Ascending aorta (tissue), 2 donors: ENCODE measurements at regions of chr16 and their contacts with region 1.

Region 1: GRCh38 chr16:25111403-25112166 is at the start of gene LCMT1:
- DNase-seq: peak; percentile 83 to 97
- H3K4me3 ChIP-seq: peak within 1 kb of the TSS; percentile 80 to 83
- H3K27ac ChIP-seq: peak within 1 kb of the TSS; percentile 57 to 62
- H3K4me1 ChIP-seq: peaks cover 9 to 21% of the 10 kb centered on the region in 2 donors
- H3K27me3 ChIP-seq: no peaks in the 10 kb centered on the region
- CTCF ChIP-seq: peak in 1 of 3 experiments; percentile 14
- total RNA-seq, gene LCMT1: 2.6 TPM

Region 2: DNA sequence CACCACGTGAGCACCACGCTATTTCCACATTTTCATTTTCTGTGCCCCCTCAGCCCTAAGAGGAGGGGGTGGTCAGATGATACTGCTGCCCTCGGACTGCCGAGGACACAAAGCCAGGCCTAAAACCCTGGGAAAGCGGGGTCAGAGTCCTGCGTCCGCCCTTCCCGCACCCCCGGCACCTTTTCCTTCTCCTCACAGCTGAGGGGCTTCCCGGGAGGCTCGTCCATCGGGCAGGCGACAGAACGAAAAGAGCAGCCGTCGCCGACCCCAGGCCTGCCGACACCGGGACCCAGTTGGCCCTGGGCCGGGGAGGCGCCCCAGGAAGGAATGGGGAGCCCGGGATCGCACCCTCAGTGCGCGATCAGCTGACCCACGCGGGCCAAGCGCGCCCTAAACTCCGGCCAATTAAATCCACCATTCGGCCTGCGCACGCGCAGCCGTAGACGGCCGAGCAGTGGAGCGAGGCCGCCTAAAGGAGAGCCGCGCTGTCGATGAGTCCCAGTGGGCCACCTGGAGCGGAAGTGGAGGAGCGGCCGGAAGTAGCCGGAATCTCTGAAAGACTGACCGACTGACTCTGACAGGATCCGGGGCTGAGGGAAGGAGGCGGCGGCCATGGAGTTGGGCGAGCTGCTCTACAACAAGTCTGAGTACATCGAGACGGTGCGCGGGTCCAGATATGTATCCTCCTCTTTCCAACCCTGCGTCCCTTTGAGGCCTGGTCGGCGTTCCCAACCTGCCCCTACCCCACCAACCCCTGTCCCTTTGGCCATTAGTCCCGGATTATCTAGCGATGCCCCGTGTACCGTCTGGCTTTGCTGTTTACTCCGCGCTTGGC is 1470.4 kb before region 1 on chr16 and contains the starts of genes DCTN5 and PALB2:
- intact Hi-C with region 1: loop called (anchors 5 kb)
- DNase-seq: peak; percentile 80 to 97
- H3K4me3 ChIP-seq: peak within 1 kb of the TSS; percentile 64 to 99
- H3K27ac ChIP-seq: peak within 1 kb of the TSS; percentile 72 to 86
- H3K4me1 ChIP-seq: peaks cover 5 to 18% of the 10 kb centered on the region in 2 donors
- H3K27me3 ChIP-seq: no peaks in the 10 kb centered on the region
- CTCF ChIP-seq: no peak
- total RNA-seq, gene DCTN5: 16.7 TPM
- total RNA-seq, gene PALB2: 2.1 TPM

Region 3: GRCh38 chr16:24539291-24539849 is 572.2 kb before region 1 on chr16 and contains the start of gene RBBP6:
- intact Hi-C with region 1: loop called (anchors 1 kb)
- DNase-seq: peak; percentile 84 to 97
- H3K4me3 ChIP-seq: peak within 1 kb of the TSS; percentile 80 to 100
- H3K27ac ChIP-seq: peak within 1 kb of the TSS; percentile 98 to 100
- H3K4me1 ChIP-seq: peaks cover 0 to 14% of the 10 kb centered on the region in 2 donors
- H3K27me3 ChIP-seq: no peaks in the 10 kb centered on the region
- CTCF ChIP-seq: peak; percentile 24 to 46 (median 30)
- total RNA-seq, gene RBBP6: 96.1 TPM

Region 4: DNA sequence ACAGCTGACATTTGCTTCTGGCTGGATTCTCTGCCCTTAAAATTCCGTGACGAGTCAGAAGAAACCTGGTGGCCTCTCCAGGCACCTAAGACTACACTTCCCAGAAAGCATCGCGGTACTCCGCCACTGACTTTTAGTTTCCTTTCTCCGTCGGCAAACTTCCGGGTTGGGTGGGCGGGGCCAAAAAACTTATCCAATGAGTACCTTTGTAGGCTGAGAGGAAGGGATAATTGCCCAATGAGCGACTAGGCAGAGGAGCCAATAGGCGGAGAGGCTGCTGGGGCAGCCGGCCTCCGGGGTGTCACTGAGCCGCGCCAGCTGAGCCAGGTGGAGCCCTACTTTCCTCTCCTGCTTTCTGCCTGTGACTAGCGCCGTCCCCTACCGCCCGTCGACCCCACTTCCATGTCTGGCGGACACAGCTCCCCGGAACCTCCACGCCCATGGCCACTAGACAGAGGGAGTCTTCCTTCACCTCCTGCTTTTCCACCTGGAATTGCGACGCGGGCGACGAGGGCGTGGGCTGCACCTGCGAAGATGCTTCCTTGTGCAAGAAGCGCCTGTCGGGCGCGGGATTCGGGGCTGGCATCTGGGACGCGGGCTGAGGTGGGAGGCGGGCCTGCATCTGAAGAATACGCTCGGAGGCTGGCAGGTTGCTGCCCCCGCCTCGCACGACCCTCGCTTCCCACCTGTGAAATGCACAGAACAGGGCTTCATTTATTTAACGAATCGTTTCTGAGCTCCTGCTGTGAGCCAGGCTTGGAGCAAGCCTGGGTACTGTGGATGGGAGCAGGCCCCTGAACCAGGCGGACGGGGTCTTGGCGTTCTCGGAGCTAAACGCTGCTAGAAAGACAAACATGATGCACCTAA is 79.9 kb before region 1 on chr16:
- intact Hi-C with region 1: loop called (anchors 1 kb)
- DNase-seq: peak; percentile 76 to 94
- H3K4me3 ChIP-seq: peak overlapping the region; percentile 79 to 93
- H3K27ac ChIP-seq: peak overlapping the region; percentile 44 to 70
- H3K4me1 ChIP-seq: peaks cover 0 to 9% of the 10 kb centered on the region in 2 donors
- H3K27me3 ChIP-seq: no peaks in the 10 kb centered on the region
- CTCF ChIP-seq: no peak

Region 5: GRCh38 chr16:25051406-25052150 is 60.0 kb before region 1 on chr16:
- intact Hi-C with region 1: loop called (anchors 2 kb)
- DNase-seq: no peak
- H3K4me3 ChIP-seq: peak overlapping the region; percentile 33 to 38
- H3K27ac ChIP-seq: peak overlapping the region; percentile 61 to 67
- H3K4me1 ChIP-seq: peaks cover 0 to 24% of the 10 kb centered on the region in 2 donors
- H3K27me3 ChIP-seq: no peaks in the 10 kb centered on the region
- CTCF ChIP-seq: no peak

Region 6: DNA sequence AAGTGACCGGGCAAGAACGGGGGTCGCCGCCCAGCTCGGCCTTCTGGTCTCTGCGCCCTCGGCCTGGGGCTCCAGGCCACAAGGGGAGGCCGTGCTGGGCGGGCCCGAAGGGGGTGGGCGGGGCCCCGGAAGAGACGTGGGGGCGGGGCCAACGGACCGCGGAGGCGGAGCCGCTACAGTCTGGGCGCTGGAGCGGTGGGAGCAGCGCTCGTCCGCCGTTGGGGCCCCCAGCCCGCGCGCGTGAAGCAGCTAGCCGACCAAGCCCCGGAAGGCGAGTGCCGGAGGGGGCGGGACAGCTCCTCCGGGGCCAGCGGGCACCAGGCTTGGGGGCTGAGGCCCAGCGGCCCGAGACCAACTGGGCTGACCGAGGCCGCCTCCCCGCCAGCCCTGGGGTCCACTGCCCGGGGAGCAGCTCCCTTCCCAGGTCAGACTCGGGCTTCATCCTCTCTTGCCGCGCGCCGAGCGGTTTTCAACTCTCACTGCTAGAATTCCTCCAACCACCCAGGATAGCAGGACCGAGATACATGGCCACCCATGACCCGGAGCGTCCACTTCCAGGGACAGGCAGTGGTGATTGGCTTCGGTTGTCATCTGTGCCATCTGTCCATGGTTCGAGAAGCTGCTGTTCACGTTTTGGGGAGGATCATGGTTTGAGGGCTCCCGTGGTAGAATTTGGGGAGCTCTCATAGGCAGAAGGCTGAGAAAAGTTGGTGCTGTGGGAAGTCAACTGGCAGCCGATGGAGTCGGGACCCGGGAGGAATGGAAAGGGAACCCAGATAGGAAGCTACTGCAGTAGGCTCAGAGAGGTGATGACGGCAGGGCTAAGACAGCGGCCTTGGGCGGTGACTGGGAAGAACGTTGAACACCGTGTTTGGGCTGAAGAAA is 44.6 kb before region 1 on chr16:
- intact Hi-C with region 1: loop called (anchors 1 kb)
- DNase-seq: peak; percentile 20 to 89
- H3K4me3 ChIP-seq: peak overlapping the region; percentile 74 to 78
- H3K27ac ChIP-seq: peak overlapping the region; percentile 87 to 97
- H3K4me1 ChIP-seq: peaks cover 0 to 8% of the 10 kb centered on the region in 2 donors
- H3K27me3 ChIP-seq: no peaks in the 10 kb centered on the region
- CTCF ChIP-seq: peak in 1 of 3 experiments; percentile 5

Region 7: DNA sequence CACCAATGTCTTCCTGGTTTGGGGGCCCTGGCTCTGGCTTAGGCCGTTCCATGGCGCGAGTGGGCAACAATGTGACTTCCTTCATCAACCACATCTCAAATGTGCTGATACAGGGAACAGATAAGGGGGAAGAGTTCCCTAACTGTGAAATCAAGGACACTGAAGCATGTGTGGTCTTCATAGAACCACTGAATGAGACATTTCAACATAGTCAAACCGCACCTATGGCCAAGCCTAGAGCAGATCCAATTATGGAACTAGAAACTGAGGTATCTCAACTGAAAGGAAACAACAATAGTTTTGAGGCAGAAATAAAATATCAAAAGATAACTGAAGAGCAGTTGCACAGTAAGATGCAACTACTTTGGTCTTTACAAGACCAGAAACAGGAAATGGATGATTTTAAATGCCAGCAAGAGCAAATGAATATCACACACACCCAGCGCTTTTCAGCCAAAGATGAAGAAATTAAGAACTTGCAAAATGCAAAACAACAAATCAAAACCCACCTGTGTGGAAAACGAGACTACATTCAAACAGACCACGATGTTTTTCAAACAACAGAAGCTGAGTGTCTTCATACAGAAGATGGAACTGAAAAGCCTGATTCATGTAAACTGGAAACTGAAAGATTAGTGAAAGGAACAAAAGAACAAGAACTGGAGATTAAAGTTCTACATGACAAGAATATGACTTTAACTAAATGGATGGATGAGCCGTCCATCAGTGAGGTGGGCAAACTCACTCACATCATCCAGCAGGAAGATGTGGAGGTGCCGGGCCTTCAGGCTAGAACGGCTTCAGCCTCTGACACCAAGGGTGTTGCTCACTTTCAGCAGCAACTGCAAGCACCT is 18.1 kb before region 1 on chr16:
- intact Hi-C with region 1: no loop called
- DNase-seq: no peak
- H3K4me3 ChIP-seq: no peak overlapping the region
- H3K27ac ChIP-seq: no peak overlapping the region
- H3K4me1 ChIP-seq: no peaks in the 10 kb centered on the region
- H3K27me3 ChIP-seq: no peaks in the 10 kb centered on the region
- CTCF ChIP-seq: no peak

Region 8: DNA sequence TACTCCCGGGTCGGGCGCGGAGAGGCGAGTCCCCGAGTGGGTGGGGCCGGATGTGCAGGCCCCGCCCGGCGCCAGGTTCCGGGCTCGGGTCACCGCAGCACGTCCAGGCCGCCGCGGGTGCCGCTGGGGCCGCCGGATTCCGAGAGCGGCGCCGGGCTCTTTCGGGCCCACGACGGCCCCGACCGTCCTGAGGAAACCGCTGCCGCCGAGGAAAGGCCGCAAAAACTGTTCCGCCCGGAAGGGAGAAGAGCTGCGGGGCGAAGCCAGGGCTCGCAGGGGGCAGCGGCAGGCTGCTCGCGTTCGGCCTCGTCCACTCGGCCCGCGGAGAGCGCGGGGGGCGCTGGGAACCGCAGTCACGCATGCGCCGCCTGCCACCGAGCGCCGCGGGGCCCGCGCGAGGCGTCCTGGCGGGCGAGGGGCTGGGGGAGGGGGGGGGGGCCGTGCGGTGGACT is 145.9 kb after region 1 on chr16 and contains the start of gene ZKSCAN2:
- intact Hi-C with region 1: loop called (anchors 5 kb)
- DNase-seq: peak; percentile 63 to 93
- H3K4me3 ChIP-seq: peak within 1 kb of the TSS; percentile 70 to 92
- H3K27ac ChIP-seq: peak within 1 kb of the TSS; percentile 91 to 98
- H3K4me1 ChIP-seq: peaks cover 7 to 20% of the 10 kb centered on the region in 2 donors
- H3K27me3 ChIP-seq: no peaks in the 10 kb centered on the region
- CTCF ChIP-seq: no peak
- total RNA-seq, gene ZKSCAN2: 3.1 TPM

Region 9: GRCh38 chr16:26031286-26031685 is 919.7 kb after region 1 on chr16:
- intact Hi-C with region 1: no loop called
- DNase-seq: no peak
- H3K4me3 ChIP-seq: no peak overlapping the region
- H3K27ac ChIP-seq: no peak overlapping the region
- H3K4me1 ChIP-seq: no peaks in the 10 kb centered on the region
- H3K27me3 ChIP-seq: no peaks in the 10 kb centered on the region
- CTCF ChIP-seq: no peak